ENCODE measurements at regions of chr6 and their contacts with region 1.

Region 1: DNA sequence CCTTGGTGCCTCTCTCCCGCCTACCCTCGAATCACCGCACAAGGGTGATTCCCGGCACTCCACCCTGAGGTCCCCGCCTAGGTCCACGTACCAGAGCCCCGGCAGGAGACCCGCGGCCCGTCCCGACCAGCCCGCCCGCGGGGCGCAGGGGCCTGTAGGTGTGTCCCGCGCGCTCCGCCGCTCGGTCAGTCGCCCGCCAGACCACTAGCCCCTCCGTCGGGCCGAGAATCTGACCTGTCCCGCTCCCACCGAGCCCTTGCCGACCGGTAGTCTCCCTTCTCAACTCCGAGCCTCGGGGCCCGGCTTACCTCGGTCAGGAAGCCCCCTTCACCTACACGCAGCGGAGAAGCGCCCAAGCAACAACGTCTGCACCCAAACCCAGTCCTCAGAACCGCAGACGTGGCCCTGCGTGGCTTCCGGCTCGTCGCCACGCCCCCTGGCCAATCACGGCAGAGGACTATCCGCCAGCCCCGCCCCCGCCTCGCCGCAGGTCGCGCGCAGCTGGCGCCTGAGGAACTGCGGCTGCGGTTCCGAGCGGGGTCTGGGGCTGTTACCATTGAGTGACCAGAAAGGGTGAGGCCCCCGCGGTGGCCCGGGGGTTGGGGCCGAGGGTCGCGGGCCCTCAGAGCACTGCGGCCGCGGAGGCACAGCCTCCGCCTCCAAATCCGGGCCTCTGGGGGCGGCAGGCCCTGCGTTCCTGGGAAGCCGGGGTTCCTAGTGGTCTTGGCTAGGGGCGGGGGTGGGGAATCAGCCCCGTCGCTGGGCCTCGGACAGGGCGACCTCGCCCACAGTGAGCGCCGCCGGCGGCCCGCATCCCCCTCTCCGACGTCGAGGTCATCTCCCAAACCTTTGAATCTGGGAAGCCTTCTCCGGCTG is at the starts of genes PGM3 and RWDD2A:
- DNase-seq: peak; percentile 93
- ATAC-seq: peak; percentile 99
- H3K4me3 Mint-ChIP-seq: peak within 1 kb of the TSS; percentile 95
- H3K27ac Mint-ChIP-seq: peak within 1 kb of the TSS; percentile 94
- H3K4me1 Mint-ChIP-seq: peaks cover 34% of the 10 kb centered on the region
- H3K27me3 Mint-ChIP-seq: no peaks in the 10 kb centered on the region
- total RNA-seq, gene PGM3: 12.6 to 19.6 TPM
- total RNA-seq, gene RWDD2A: 1.6 to 1.9 TPM

Region 2: DNA sequence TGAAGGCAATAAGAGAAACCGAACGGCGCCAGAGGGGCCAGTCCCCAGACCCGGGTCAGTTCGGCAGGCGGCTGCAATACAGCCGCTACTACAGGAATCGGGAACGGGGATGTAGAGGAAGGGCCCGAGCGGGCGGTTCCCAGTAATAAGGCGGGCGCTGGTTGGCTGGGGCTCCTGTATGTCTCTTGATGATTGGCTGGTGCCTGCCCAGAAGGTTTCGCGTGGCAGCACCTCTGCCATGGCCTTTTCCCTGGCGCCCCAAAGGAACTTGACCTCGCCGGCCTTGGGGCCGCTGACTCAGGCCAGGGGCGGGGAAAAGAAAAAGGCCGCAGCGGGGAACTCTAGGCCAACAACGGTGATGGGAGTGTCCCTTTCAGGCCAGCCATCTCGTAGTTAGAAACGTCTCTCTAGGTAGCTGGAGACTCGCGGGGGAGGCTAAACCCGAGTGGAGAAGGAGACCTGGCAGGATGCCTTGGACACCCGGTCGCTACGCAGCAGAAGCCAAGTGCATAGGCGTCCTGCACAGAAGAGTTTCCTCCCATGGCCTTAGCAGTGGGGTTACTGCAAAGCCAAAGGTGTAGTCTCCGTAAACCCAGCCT is 945.4 kb before region 1 on chr6 and contains the start of gene IBTK:
- CTCF ChIA-PET with region 1: no interaction called
- POLR2A ChIA-PET with region 1: no interaction called
- intact Hi-C with region 1: loop called (anchors 1 to 10 kb)
- DNase-seq: peak; percentile 92
- ATAC-seq: peak; percentile 87
- H3K4me3 Mint-ChIP-seq: peak within 1 kb of the TSS; percentile 97
- H3K27ac Mint-ChIP-seq: peak within 1 kb of the TSS; percentile 93
- H3K4me1 Mint-ChIP-seq: peaks cover 34% of the 10 kb centered on the region
- H3K27me3 Mint-ChIP-seq: no peaks in the 10 kb centered on the region
- total RNA-seq, gene IBTK: 28.6 to 29.5 TPM

Region 3: GRCh38 chr6:82363351-82364086 is 829.6 kb before region 1 on chr6 and contains the start of gene TPBG:
- CTCF ChIA-PET with region 1: no interaction called
- POLR2A ChIA-PET with region 1: no interaction called
- intact Hi-C with region 1: loop called in 1 of 2 experiments (anchors 5 kb)
- DNase-seq: peak; percentile 52
- ATAC-seq: peak; percentile 63
- H3K4me3 Mint-ChIP-seq: peak within 1 kb of the TSS; percentile 74
- H3K27ac Mint-ChIP-seq: no peak within 1 kb of the TSS
- H3K4me1 Mint-ChIP-seq: peaks cover 17% of the 10 kb centered on the region
- H3K27me3 Mint-ChIP-seq: peaks cover 51% of the 10 kb centered on the region
- total RNA-seq, gene TPBG: 0.33 to 0.43 TPM

Region 4: GRCh38 chr6:83169511-83169910 is 23.6 kb before region 1 on chr6:
- CTCF ChIA-PET with region 1: interaction called, 10 read pairs
- POLR2A ChIA-PET with region 1: interaction called, 3 read pairs
- intact Hi-C with region 1: no loop called
- DNase-seq: no peak
- ATAC-seq: no peak
- H3K4me3 Mint-ChIP-seq: no peak overlapping the region
- H3K27ac Mint-ChIP-seq: no peak overlapping the region
- H3K4me1 Mint-ChIP-seq: no peaks in the 10 kb centered on the region
- H3K27me3 Mint-ChIP-seq: no peaks in the 10 kb centered on the region

Region 5: GRCh38 chr6:83215131-83216047 is 22.3 kb after region 1 on chr6:
- CTCF ChIA-PET with region 1: interaction called, 10 read pairs
- POLR2A ChIA-PET with region 1: no interaction called
- intact Hi-C with region 1: loop called (anchors 1 to 2 kb)
- DNase-seq: peak; percentile 72
- ATAC-seq: peak; percentile 99
- H3K4me3 Mint-ChIP-seq: no peak overlapping the region
- H3K27ac Mint-ChIP-seq: no peak overlapping the region
- H3K4me1 Mint-ChIP-seq: peaks cover 2% of the 10 kb centered on the region
- H3K27me3 Mint-ChIP-seq: peaks cover 10% of the 10 kb centered on the region

Region 6: GRCh38 chr6:83859410-83860358 is 666.6 kb after region 1 on chr6 and contains the start of gene CYB5R4:
- CTCF ChIA-PET with region 1: no interaction called
- POLR2A ChIA-PET with region 1: no interaction called
- intact Hi-C with region 1: loop called in 1 of 2 experiments (anchors 1 kb)
- DNase-seq: peak; percentile 96
- ATAC-seq: peak; percentile 98
- H3K4me3 Mint-ChIP-seq: peak within 1 kb of the TSS; percentile 97
- H3K27ac Mint-ChIP-seq: peak within 1 kb of the TSS; percentile 92
- H3K4me1 Mint-ChIP-seq: peaks cover 27% of the 10 kb centered on the region
- H3K27me3 Mint-ChIP-seq: peaks cover 11% of the 10 kb centered on the region
- total RNA-seq, gene CYB5R4: 21.9 to 28.2 TPM